ENCODE measurements at regions of chr11 and their contacts with region 1.

Region 1: GRCh38 chr11:83480811-83481210 is 194.6 kb upstream of the CCDC90B start:
- DNase-seq: no peak
- ATAC-seq: no peak
- H3K4me3 ChIP-seq: no peak overlapping the region
- H3K4me3 Mint-ChIP-seq: no peak overlapping the region
- H3K27ac ChIP-seq: no peak overlapping the region
- H3K27ac Mint-ChIP-seq: no peak overlapping the region
- H3K4me1 ChIP-seq: no peaks in the 10 kb centered on the region
- H3K4me1 Mint-ChIP-seq: no peaks in the 10 kb centered on the region
- H3K27me3 ChIP-seq: no peaks in the 10 kb centered on the region
- H3K27me3 Mint-ChIP-seq: peaks cover 15% of the 10 kb centered on the region
- CTCF ChIP-seq: no peak

Region 2: DNA sequence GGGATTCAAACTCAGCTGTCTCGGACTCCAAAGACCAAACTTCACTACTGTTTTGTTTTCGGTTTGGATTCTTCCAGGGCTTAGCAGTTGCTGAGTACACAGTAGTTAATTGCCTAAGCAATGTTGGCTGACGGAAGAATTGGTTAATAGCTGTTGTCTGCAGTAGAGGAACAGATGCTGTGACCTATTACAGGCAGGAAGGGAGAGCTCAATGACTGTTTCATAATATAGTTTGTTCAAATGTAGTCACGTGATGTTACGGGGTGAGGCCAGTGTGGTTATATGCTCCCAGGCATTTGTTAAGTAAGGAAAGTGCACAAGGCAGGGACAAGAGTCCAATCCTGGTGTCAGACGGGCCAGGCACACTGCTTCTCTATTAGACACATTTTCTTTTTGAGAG is 28.0 kb after region 1 on chr11:
- CTCF ChIA-PET with region 1: no interaction called
- POLR2A ChIA-PET with region 1: no interaction called
- intact Hi-C with region 1: loop called in 1 of 2 experiments (anchors 1 kb)
- DNase-seq: no peak
- ATAC-seq: no peak
- H3K4me3 ChIP-seq: no peak overlapping the region
- H3K4me3 Mint-ChIP-seq: no peak overlapping the region
- H3K27ac ChIP-seq: no peak overlapping the region
- H3K27ac Mint-ChIP-seq: no peak overlapping the region
- H3K4me1 ChIP-seq: no peaks in the 10 kb centered on the region
- H3K4me1 Mint-ChIP-seq: no peaks in the 10 kb centered on the region
- H3K27me3 ChIP-seq: no peaks in the 10 kb centered on the region
- H3K27me3 Mint-ChIP-seq: peaks cover 2% of the 10 kb centered on the region
- CTCF ChIP-seq: no peak

Region 3: DNA sequence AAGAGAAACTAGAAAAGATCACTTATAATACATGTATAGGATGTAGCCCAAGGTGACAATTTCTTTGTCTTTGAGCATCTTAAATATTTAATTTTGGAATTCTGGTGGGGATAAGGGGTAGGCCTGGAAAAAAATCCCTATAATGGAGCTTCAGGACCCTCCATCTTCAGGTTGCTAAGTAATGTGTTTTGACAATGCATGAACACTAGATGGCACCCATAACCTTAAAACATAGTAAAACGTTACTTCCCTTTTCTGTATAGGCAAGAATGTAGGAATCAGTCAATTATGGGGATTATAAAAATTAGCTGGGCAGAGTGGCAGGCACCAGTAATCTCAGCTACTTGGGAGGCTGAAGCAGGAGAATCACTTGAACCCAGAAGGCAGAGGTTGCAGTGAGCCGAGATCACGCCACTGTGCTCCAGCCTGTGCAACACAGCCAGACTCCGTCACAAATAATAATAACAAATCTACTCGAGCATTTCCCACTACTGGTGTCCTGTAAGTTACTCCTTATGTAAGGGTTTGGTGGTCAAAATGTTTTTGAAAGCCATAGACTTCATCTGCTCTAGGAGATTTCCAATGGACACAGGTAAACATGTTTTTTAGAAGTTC is 347.2 kb after region 1 on chr11:
- CTCF ChIA-PET with region 1: no interaction called
- POLR2A ChIA-PET with region 1: no interaction called
- intact Hi-C with region 1: no loop called
- DNase-seq: peak in 1 of 9 experiments; percentile 4
- ATAC-seq: no peak
- H3K4me3 ChIP-seq: no peak overlapping the region
- H3K4me3 Mint-ChIP-seq: no peak overlapping the region
- H3K27ac ChIP-seq: no peak overlapping the region
- H3K27ac Mint-ChIP-seq: no peak overlapping the region
- H3K4me1 ChIP-seq: no peaks in the 10 kb centered on the region
- H3K4me1 Mint-ChIP-seq: peaks cover 1% of the 10 kb centered on the region
- H3K27me3 ChIP-seq: no peaks in the 10 kb centered on the region
- H3K27me3 Mint-ChIP-seq: peaks cover 4% of the 10 kb centered on the region
- CTCF ChIP-seq: no peak

Measured in CD8-positive, alpha-beta T cell (primary cell).